Activated CD8-positive, alpha-beta T cell treated with anti-CD3 and anti-CD28 coated beads, Interleukin-2, amount 10 ng/mL, durations not matched to agents 7 days and 5 days (primary cell): ENCODE measurements at regions of chr12 and their contacts with region 1.

Region 1: DNA sequence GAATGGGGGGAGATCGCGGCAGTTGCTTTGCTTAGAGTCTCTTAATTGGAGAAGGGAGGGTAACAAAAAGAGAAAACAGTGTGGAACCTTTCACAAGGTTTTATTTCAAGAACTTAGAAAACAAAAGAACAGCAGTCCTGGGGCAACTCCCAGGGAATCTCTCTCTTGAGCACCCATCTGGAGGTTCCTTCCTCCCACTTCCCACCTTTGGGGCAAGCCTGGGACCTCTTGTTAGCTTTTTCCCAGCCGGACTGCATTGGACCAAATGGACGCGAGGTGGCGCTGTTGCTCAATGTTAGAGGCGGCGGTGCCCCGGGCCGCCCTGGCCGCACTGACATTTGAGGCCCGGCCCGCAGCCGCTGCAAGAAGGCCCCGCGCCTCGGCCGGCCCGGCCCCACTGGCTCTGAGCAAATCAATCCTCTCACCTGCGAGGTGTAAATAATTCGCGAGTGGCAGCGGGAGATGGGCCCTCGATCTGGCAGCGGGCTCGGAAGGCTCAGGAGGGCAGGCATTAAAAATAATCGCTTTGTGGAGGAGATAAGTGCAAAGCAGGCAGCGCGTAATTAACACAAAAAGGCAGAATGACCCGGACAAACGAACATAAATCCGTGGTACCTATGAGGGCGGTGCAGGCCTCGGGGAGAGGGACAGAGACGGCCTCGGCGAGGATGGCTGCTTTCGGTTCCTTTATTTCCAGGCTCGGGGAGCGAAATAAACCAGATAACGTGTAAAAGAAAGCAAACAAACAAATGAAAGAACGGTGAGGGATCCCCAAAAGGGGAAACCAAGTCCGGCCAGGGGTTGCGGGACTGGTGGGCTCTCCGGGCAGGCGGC is 2.7 kb upstream of the HOXC8 start:
- DNase-seq: peak; percentile 88
- ATAC-seq: peak; percentile 82
- H3K4me3 Mint-ChIP-seq: peak overlapping the region; percentile 71
- H3K27ac Mint-ChIP-seq: no peak overlapping the region
- H3K4me1 Mint-ChIP-seq: peaks cover 20% of the 10 kb centered on the region
- H3K27me3 Mint-ChIP-seq: peaks cover 92% of the 10 kb centered on the region

Region 2: GRCh38 chr12:53984901-53985709 is 21.0 kb before region 1 on chr12 and contains the start of gene HOXC10:
- CTCF ChIA-PET with region 1: interaction called, 19 read pairs
- POLR2A ChIA-PET with region 1: no interaction called
- DNase-seq: peak; percentile 86
- ATAC-seq: peak; percentile 74
- H3K4me3 Mint-ChIP-seq: peak within 1 kb of the TSS; percentile 48
- H3K27ac Mint-ChIP-seq: peak within 1 kb of the TSS; percentile 52
- H3K4me1 Mint-ChIP-seq: peaks cover 43% of the 10 kb centered on the region
- H3K27me3 Mint-ChIP-seq: peaks cover 93% of the 10 kb centered on the region
- total RNA-seq, gene HOXC10: not detected

Region 3: DNA sequence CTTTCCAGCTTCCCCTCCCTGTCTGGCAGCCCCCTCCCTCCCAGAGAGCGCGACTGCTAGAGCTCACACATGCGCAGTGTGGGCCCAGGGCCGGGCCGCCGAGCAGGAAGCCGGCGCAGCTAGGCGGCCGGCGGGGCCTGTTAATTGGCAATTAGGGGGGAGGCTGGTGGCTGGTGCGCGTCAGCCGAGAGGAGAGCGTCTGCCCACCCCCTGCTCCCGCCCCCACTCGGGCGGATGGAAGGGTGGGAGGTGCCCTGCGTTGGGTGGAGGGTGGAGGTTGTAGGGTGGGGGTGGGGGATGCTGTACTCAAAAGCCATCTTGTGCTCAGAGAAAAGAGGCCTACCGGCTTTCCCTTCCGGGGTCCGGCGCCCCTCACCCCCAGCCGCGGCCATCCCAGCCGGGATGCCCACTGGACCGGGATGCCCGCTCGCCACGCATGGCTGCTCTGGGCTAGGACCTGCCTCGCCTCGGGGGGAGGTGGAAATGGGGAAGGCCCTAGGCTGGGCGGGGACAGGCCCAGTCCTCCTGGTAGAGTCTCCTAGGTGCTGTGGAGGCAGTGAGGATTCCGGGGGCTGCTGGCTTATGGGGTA is 11.9 kb after region 1 on chr12:
- CTCF ChIA-PET with region 1: interaction called, 19 read pairs
- POLR2A ChIA-PET with region 1: no interaction called
- DNase-seq: peak; percentile 83
- ATAC-seq: peak; percentile 91
- H3K4me3 Mint-ChIP-seq: peak overlapping the region; percentile 80
- H3K27ac Mint-ChIP-seq: peak overlapping the region; percentile 46
- H3K4me1 Mint-ChIP-seq: peaks cover 27% of the 10 kb centered on the region
- H3K27me3 Mint-ChIP-seq: peaks cover 80% of the 10 kb centered on the region

Region 4: GRCh38 chr12:54191550-54192022 is 185.5 kb after region 1 on chr12:
- CTCF ChIA-PET with region 1: interaction called, 91 read pairs
- POLR2A ChIA-PET with region 1: no interaction called
- DNase-seq: peak; percentile 85
- ATAC-seq: peak; percentile 66
- H3K4me3 Mint-ChIP-seq: no peak overlapping the region
- H3K27ac Mint-ChIP-seq: no peak overlapping the region
- H3K4me1 Mint-ChIP-seq: peaks cover 24% of the 10 kb centered on the region
- H3K27me3 Mint-ChIP-seq: peaks cover 50% of the 10 kb centered on the region

Region 5: DNA sequence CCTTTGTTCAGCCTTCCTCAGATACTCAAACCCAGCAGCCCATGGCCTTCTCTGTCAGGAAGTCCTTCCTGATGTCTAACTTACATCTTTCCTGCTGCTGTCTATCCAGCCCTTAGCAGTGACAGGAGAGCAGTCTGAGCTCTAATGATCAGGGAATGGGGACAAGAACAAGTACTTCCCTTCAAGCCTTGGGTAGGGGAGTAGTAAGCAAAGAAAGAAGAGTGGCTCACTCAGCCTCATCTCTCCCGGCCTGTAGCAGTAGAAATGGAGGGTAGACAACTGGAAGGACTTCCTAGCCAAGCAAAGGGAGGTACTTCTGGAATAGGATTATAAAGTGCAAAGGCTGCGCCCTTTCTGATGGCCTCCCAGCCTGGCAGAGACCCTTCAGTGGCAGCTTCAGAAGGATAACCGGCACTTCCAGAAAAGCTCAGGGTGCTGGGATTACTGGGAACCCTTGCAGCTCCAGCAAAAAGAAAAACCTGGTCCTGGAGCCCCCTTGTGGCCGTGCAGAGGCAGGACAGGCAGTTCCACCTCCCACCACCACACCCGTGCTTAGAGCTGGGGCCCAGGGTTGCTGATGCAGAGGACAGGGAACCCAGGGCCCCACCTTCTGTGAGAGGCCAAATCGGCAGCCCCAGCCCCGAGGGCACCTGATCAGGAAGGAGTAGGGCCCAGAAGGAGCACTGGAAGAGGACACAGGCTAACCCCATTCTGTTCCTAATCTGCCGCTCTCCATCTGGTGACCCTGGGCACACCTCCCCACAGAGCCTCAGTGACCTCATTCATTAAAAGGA is 195.1 kb after region 1 on chr12:
- CTCF ChIA-PET with region 1: interaction called, 91 read pairs
- POLR2A ChIA-PET with region 1: no interaction called
- DNase-seq: peak; percentile 74
- ATAC-seq: peak; percentile 94
- H3K4me3 Mint-ChIP-seq: no peak overlapping the region
- H3K27ac Mint-ChIP-seq: no peak overlapping the region
- H3K4me1 Mint-ChIP-seq: peaks cover 3% of the 10 kb centered on the region
- H3K27me3 Mint-ChIP-seq: peaks cover 44% of the 10 kb centered on the region

Region 6: DNA sequence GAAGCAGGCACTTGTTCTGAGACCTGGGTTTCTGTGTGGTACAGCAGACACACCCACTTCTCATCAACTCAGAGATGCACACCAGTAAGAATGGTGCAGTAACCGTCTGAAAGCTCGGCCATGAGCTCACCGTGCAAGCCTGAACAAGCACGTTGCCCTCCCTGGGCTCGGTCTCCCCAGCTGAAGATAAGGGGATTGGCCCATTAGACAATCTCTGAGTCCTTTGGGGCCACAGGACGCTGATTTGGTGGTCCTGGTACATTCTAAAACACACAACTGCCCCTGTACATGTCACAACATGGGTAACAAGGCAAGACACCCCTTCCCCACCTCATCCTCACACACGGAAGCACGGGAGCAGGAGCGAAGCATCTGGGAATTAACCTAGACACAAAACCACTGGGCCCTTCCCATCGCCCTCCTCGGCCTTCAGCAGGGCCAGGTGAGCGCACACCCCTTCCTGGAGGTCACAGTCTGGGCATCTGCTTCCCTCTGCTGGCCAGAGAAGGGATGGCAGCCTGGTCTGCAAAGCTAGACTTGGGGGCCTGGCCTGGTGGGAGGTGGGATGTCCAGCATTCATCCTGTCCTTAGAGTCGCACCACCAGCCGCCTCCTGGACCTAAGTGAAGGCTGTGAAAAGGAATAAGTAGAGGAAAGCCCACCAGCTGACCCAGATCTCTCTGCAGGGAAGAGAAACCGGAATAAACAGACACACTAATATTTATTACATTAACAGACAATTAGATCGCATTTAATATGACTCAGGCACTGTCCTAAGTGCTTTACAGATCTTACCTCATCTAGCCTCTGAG is 201.6 kb after region 1 on chr12:
- CTCF ChIA-PET with region 1: interaction called, 89 read pairs
- POLR2A ChIA-PET with region 1: no interaction called
- DNase-seq: peak; percentile 85
- ATAC-seq: peak; percentile 92
- H3K4me3 Mint-ChIP-seq: no peak overlapping the region
- H3K27ac Mint-ChIP-seq: no peak overlapping the region
- H3K4me1 Mint-ChIP-seq: peaks cover 4% of the 10 kb centered on the region
- H3K27me3 Mint-ChIP-seq: peaks cover 40% of the 10 kb centered on the region

Region 7: DNA sequence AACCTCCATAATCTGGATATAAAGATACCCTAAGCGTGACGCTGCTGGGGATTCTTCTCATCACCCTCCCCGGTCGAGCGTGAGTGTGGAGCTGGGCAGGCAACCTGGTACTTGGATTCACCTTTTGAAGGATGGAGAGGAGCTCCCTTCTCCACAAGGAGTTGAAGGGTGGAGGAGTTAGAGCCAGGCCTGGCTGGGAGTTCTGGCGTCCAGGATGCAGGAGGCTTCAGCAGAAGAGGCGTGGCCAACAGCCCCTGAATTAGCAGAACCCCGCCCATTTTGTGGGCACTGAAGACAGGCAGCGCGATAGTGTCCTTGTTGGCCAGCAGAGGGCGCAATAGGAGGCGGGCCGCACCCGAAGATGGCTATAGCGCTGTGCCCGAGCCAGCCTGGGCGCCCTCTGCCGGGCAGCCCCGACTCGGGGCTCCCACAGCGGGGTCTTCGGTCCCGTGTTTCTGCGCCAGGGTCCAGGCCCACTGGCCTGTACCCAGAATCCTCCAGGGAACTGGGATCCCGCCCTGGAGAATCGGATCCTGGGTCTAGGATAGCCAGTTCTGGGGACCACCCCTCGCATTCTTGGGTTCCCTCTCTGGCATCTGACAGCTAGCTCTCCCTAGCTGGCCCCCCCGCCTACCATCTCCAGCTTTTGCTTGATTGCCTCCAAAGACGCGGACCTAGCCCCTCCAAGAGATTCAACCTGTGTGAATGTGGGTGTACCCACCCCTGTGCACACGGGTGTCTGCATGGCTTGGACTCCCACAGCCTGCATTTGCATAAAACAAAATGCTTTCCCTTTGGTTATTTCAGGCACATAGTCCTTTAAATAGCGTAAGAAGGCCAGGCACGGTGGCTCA is 208.7 kb after region 1 on chr12:
- CTCF ChIA-PET with region 1: interaction called, 25 read pairs
- POLR2A ChIA-PET with region 1: no interaction called
- DNase-seq: peak; percentile 96
- ATAC-seq: peak; percentile 87
- H3K4me3 Mint-ChIP-seq: peak overlapping the region; percentile 69
- H3K27ac Mint-ChIP-seq: peak overlapping the region; percentile 21
- H3K4me1 Mint-ChIP-seq: peaks cover 43% of the 10 kb centered on the region
- H3K27me3 Mint-ChIP-seq: peaks cover 39% of the 10 kb centered on the region